Left cardiac atrium (tissue), 4 donors: ENCODE measurements at regions of chr11 and their contacts with region 1.

Region 1: GRCh38 chr11:29844701-29845379 is 172.0 kb downstream of the KCNA4 start:
- DNase-seq: no peak
- ATAC-seq: no peak

Region 2: GRCh38 chr11:30046582-30046952 is 201.7 kb after region 1 on chr11:
- intact Hi-C with region 1: loop called in 1 of 2 experiments (anchors 10 kb)
- DNase-seq: no peak
- ATAC-seq: no peak